ENCODE measurements at regions of chr15 and their contacts with region 1.

Region 1: GRCh38 chr15:26848498-26848897 is 18.4 kb upstream of the GABRA5 start:
- DNase-seq: no peak
- ATAC-seq: no peak
- H3K4me3 ChIP-seq: no peak overlapping the region
- H3K27ac ChIP-seq: no peak overlapping the region
- H3K4me1 ChIP-seq: no peaks in the 10 kb centered on the region
- H3K27me3 ChIP-seq: no peaks in the 10 kb centered on the region
- CTCF ChIP-seq: no peak
- POLR2A ChIP-seq: no peak

Region 2: DNA sequence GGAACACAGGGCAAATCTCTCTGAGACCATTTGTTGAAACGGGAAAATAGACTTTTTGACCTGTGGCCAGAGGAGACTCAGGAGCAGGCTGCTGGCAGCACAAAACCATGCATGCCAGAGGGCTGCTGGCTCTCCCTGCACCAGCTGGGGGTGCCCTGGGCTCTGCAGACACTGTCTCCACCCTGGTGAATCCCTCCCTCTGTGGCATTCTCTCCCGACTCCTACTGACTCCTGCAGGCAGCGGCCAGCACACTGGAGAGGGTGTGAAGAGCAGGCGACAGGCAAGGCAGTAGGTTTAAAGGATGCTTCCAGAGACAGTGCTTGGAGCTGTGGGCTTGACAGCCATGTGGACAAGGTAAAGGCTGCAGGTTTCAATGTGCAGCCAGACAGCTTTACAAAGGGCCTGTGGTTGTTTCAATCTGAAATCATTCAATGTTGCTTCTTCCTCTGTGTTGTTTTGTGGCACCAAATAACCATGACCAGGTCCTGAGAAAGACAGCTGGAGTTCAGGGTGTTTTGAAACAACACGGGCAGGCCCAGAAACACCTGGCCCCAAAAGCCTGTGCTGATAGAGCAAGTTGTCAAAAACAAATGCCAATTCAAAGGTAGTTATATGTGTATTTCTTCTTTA is 554.3 kb before region 1 on chr15:
- intact Hi-C with region 1: loop called in 1 of 10 experiments (anchors 10 kb)
- DNase-seq: peak in 4 of 5 donors; percentile 31 to 71 (median 54)
- ATAC-seq: peak; percentile 91 to 96 (median 94)
- H3K4me3 ChIP-seq: no peak overlapping the region
- H3K27ac ChIP-seq: no peak overlapping the region
- H3K4me1 ChIP-seq: no peaks in the 10 kb centered on the region
- H3K27me3 ChIP-seq: no peaks in the 10 kb centered on the region
- CTCF ChIP-seq: peak in 11 of 12 donors; percentile 13 to 57 (median 35)
- POLR2A ChIP-seq: no peak

Region 3: GRCh38 chr15:26910715-26911114 is 62.2 kb after region 1 on chr15:
- intact Hi-C with region 1: loop called in 1 of 10 experiments (anchors 10 kb)
- DNase-seq: no peak
- ATAC-seq: no peak
- H3K4me3 ChIP-seq: no peak overlapping the region
- H3K27ac ChIP-seq: no peak overlapping the region
- H3K4me1 ChIP-seq: no peaks in the 10 kb centered on the region
- H3K27me3 ChIP-seq: no peaks in the 10 kb centered on the region
- CTCF ChIP-seq: no peak
- POLR2A ChIP-seq: no peak